ENCODE measurements at regions of chr9 and their contacts with region 1.

Region 1: GRCh38 chr9:82532504-82533180 is 530.3 kb downstream of the RASEF start:
- DNase-seq: no peak
- H3K4me3 Mint-ChIP-seq: no peak overlapping the region
- H3K27ac Mint-ChIP-seq: no peak overlapping the region
- H3K4me1 Mint-ChIP-seq: no peaks in the 10 kb centered on the region
- H3K27me3 Mint-ChIP-seq: no peaks in the 10 kb centered on the region
- CTCF ChIP-seq: peak; percentile 16

Region 2: GRCh38 chr9:82606492-82607382 is 74.1 kb after region 1 on chr9:
- CTCF ChIA-PET with region 1: no interaction called
- intact Hi-C with region 1: loop called (anchors 5 kb)
- DNase-seq: peak; percentile 48
- H3K4me3 Mint-ChIP-seq: no peak overlapping the region
- H3K27ac Mint-ChIP-seq: no peak overlapping the region
- H3K4me1 Mint-ChIP-seq: no peaks in the 10 kb centered on the region
- H3K27me3 Mint-ChIP-seq: no peaks in the 10 kb centered on the region
- CTCF ChIP-seq: peak; percentile 24

Region 3: DNA sequence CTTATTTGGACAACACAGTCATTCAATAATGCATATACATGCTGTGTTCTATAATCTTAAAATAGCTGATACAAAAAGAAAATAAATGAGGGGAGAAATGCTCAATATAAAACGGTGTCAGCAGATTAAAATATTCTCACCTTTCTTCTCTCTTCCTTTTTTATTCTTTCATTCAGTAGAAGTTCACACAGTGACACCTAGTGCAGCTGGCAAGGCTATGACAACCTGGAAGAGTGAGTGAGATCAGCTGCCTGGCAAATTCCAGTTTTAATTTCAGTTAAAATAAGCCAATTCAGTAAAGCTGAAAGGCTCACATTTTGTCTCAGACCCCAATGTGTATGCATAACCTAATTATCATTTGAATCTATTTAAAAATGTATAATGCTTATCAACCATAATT is 380.0 kb after region 1 on chr9:
- CTCF ChIA-PET with region 1: no interaction called
- intact Hi-C with region 1: loop called (anchors 5 kb)
- DNase-seq: no peak
- H3K4me3 Mint-ChIP-seq: no peak overlapping the region
- H3K27ac Mint-ChIP-seq: no peak overlapping the region
- H3K4me1 Mint-ChIP-seq: no peaks in the 10 kb centered on the region
- H3K27me3 Mint-ChIP-seq: no peaks in the 10 kb centered on the region
- CTCF ChIP-seq: no peak

Region 4: DNA sequence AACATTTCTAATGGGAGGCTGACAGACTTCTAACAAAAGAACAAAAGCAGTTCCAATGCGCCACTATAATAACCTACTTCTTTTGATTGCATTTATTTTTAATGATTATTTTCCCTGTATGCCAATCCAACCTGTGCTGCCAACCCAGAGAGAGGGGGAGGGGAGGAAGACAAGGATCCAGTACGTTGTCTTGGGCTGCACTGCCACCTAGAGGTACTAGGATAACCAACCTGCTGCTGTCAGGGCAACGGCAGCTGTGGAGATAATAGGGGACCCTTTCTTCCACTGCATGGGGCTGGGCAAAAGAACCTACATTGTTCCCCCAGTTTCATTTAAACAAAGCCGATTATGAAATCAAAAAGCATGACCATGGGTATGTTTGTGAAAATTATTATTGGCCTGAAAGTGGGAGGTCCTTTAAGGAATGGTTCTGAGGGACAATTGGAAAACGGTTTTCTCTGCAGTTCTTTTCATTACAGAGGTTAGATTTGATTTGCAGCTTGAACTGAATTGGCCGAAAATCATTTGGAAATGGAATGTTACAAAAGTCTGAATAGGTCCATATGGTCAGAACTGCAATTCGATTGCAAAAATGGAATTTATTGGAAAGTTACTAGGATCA is 429.0 kb after region 1 on chr9:
- CTCF ChIA-PET with region 1: no interaction called
- intact Hi-C with region 1: loop called (anchors 1 kb)
- DNase-seq: peak; percentile 80
- H3K4me3 Mint-ChIP-seq: no peak overlapping the region
- H3K27ac Mint-ChIP-seq: no peak overlapping the region
- H3K4me1 Mint-ChIP-seq: no peaks in the 10 kb centered on the region
- H3K27me3 Mint-ChIP-seq: no peaks in the 10 kb centered on the region
- CTCF ChIP-seq: peak; percentile 57